GM12878 (cell line): ENCODE measurements at regions of chr17 and their contacts with region 1.

Region 1: DNA sequence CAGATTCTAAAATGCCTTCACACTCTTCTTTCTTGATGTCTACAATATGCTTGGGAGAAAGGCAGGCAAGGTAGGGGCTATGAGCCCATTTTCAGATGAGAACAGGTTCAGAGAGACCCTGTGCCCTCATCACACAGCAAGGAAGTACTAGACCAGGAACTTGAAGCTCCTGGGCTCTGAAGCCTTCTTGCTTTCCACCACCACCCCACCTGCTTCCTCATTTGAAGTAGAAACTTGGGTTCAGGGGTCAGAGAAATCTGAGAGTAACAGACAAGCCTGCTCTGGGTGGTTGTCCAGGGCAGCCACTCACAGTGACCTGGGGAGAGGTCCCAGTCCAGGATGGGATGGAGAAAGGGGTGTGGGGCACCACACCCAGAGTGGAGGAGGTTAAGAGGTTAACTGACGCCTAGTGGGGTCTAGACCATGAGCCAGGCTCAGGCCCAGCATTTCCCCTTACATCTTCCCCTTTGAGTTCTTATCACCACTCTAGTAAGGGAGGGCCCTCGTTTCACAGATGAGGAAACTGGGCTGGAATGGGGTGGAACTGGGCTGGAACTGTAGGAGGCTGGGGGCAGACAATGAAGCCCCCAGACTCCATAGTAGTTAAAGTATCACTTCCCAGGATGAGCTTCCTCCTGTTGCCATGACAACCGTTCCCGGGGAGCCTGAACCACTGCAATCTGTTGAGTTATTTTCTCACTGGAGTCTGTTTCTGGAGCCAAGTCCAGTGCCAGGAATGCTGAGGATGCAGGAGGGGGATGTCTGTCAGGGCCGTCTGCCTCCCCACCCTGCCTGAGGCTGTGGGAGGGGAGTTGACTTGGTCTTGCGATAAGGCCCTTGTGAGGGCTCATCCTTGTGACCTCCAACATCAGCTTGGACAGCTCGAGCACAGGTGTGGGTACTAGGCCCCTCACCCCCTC is 16.2 kb upstream of the PHF12 start:
- DNase-seq: no peak
- ATAC-seq: peak; percentile 59
- H3K4me3 ChIP-seq: no peak overlapping the region
- H3K27ac ChIP-seq: no peak overlapping the region
- H3K4me1 ChIP-seq: peaks cover 3% of the 10 kb centered on the region; the same call in 1 of the 2 replicates
- H3K27me3 ChIP-seq: peaks cover 0 to 2% of the 10 kb centered on the region in 2 experiments; a peak in 1 of 4 replicates
- CTCF ChIP-seq: no peak
- EP300 ChIP-seq: no peak
- POLR2A ChIP-seq: no peak
- RAD21 ChIP-seq: no peak

Region 2: DNA sequence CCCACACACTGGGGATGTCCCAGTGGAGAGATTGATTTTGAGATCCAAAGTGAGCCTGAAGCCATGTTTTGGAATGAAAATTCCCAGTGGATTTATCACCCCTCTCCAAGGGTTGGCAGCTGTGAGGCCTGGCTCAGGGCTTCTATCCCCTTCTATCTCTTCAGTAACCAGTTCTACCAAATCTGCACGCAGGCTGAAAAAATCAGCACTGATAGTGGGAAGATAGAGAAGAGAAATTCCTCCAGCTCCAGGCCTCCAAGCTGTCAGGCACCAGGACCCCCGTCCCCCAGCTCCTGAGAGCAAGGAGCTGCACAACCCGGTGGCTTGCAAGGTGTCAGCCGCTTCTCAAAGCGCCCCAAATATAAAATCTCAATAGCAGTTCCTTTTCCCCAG is 71.0 kb before region 1 on chr17:
- CTCF ChIA-PET with region 1: no interaction called
- POLR2A ChIA-PET with region 1: no interaction called
- RAD21 ChIA-PET with region 1: no interaction called
- SMC1A ChIA-PET with region 1: no interaction called
- in situ Hi-C with region 1: no loop called
- intact Hi-C with region 1: no loop called
- DNase-seq: no peak
- ATAC-seq: no peak
- H3K4me3 ChIP-seq: peak overlapping the region; percentile 92
- H3K27ac ChIP-seq: peak overlapping the region; percentile 72; the same call in 1 of the 2 replicates
- H3K4me1 ChIP-seq: peaks cover 45% of the 10 kb centered on the region
- H3K27me3 ChIP-seq: no peaks in the 10 kb centered on the region
- CTCF ChIP-seq: no peak
- EP300 ChIP-seq: no peak
- POLR2A ChIP-seq: no peak
- RAD21 ChIP-seq: no peak

Region 3: GRCh38 chr17:29003304-29003703 is 35.8 kb after region 1 on chr17:
- CTCF ChIA-PET with region 1: interaction called, 11 read pairs
- POLR2A ChIA-PET with region 1: no interaction called
- RAD21 ChIA-PET with region 1: no interaction called
- SMC1A ChIA-PET with region 1: no interaction called
- in situ Hi-C with region 1: no loop called
- intact Hi-C with region 1: no loop called
- DNase-seq: no peak
- ATAC-seq: no peak
- H3K4me3 ChIP-seq: no peak overlapping the region
- H3K27ac ChIP-seq: no peak overlapping the region
- H3K4me1 ChIP-seq: no peaks in the 10 kb centered on the region
- H3K27me3 ChIP-seq: peaks cover 4 to 18% of the 10 kb centered on the region in 2 experiments
- CTCF ChIP-seq: no peak
- EP300 ChIP-seq: no peak
- POLR2A ChIP-seq: no peak
- RAD21 ChIP-seq: no peak

Region 4: DNA sequence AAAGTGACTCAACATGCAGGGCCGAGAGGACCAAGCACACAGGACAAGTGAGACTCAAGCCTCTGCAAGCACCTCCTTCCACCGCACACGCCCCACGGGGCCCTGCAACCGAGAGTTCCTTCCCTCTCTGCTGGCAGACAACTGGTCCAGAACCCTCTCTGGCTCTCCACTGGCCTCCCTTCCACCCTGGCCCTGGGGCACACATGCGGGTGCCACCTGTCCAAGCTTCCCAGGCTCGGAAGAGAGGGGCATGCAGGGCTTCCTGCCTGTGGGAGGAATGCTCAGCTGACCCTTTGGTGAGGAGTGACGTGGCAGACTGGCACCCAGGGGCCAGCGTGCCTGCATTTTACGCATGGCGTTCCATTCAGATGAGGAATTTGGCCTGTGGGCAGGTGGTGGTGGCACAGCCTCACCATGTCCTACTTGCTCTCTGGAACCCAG is 135.3 kb after region 1 on chr17:
- CTCF ChIA-PET with region 1: interaction called, 415 read pairs
- POLR2A ChIA-PET with region 1: interaction called, 3 read pairs
- RAD21 ChIA-PET with region 1: interaction called, 3 read pairs
- SMC1A ChIA-PET with region 1: interaction called, 9 read pairs
- in situ Hi-C with region 1: no loop called
- intact Hi-C with region 1: no loop called
- DNase-seq: no peak
- ATAC-seq: no peak
- H3K4me3 ChIP-seq: no peak overlapping the region
- H3K27ac ChIP-seq: no peak overlapping the region
- H3K4me1 ChIP-seq: no peaks in the 10 kb centered on the region
- H3K27me3 ChIP-seq: no peaks in the 10 kb centered on the region
- CTCF ChIP-seq: no peak
- EP300 ChIP-seq: no peak
- POLR2A ChIP-seq: no peak
- RAD21 ChIP-seq: no peak

Region 5: DNA sequence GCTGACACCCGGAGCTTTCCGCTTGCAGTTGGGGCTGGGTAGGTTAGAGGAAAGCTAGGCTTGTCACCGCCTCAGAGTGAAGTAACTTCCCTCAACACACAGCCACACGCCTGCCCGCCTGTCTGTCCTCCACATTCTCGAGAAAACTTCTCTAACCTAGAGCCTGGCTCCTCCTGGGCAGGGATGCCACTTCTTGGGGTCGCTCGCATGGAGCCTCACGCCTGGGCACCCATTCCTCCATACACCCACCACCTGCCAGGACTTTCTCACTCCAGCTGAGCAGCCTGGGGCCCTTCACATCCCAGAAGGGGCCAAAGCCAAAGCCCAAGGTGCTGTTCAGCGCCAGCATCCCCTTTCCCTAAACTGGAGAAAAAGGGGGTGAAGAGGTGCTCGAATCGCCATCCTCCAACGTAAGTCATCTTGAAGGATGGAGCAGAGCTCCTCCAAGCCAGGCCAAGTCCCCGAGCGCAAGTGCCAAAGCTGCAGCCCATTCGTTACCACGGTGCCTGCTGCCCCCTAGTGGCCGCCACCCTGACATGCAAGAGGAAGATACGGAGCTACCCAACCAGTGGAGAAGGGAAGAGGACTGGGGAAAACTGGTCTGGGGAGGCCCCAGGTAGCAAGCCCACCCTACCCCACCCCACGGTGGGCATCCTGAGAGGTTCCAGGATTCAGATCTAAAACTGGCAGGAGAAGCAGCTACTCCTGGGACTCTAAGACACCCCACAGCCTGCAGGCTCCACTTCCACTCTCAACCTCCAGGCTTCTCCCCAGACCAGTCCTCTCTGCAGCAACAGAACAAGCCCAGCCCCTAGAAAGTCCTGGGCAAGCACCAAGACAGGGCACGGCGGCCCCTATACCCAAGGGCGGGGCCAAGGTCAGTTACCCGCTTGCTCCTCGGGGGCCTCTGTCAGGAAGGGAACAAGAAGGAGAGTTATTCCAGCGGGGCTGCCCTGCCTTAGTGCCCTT is 149.6 kb after region 1 on chr17:
- CTCF ChIA-PET with region 1: interaction called, 415 read pairs
- POLR2A ChIA-PET with region 1: interaction called, 5 read pairs
- RAD21 ChIA-PET with region 1: interaction called, 170 read pairs
- SMC1A ChIA-PET with region 1: interaction called, 68 read pairs
- in situ Hi-C with region 1: loop called (anchors 5 kb)
- intact Hi-C with region 1: loop called (anchors 1 kb)
- DNase-seq: peak; percentile 5
- ATAC-seq: peak; percentile 89
- H3K4me3 ChIP-seq: no peak overlapping the region
- H3K27ac ChIP-seq: no peak overlapping the region
- H3K4me1 ChIP-seq: no peaks in the 10 kb centered on the region
- H3K27me3 ChIP-seq: no peaks in the 10 kb centered on the region
- CTCF ChIP-seq: peak; percentile 90 to 95 (median 92)
- EP300 ChIP-seq: no peak
- POLR2A ChIP-seq: no peak
- RAD21 ChIP-seq: peak; percentile 70

Region 6: DNA sequence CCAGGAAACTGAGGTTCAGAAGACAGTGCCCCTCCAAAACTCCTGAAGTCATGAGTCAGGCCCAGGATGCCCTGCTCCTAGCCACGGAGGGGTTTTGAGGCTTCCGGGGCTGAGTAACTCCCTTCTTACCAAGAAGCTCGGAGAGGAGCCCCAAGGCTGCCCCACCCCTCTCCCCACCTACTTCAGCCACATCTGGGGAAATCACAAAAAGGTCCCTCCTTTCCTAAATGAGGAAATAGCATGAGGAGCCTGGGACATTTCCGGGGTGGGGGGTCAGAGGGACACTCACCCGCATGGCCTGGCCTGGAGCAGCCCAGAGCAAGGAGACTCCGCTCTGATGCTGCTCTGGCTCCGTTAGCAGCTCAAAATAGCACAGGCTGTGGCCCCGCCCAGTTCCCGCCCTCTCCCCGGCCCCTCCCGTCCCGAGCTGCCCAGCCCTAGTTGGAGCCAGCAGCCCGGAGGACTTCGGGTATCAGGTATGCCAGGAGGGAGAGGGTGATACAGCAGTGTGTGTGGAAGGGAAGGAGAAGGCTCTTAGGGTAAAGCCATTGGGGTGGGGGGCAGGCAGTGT is 172.7 kb after region 1 on chr17:
- CTCF ChIA-PET with region 1: interaction called, 17 read pairs
- POLR2A ChIA-PET with region 1: no interaction called
- RAD21 ChIA-PET with region 1: interaction called, 8 read pairs
- SMC1A ChIA-PET with region 1: interaction called, 4 read pairs
- in situ Hi-C with region 1: no loop called
- intact Hi-C with region 1: no loop called
- DNase-seq: no peak
- ATAC-seq: peak; percentile 82
- H3K4me3 ChIP-seq: peak overlapping the region; percentile 81
- H3K27ac ChIP-seq: peak overlapping the region; percentile 76
- H3K4me1 ChIP-seq: peaks cover 31% of the 10 kb centered on the region
- H3K27me3 ChIP-seq: no peaks in the 10 kb centered on the region
- CTCF ChIP-seq: no peak
- EP300 ChIP-seq: no peak
- POLR2A ChIP-seq: peak; percentile 81
- RAD21 ChIP-seq: no peak